Uterus (tissue), 4 donors: ENCODE measurements at regions of chr7 and their contacts with region 1.

Region 1: GRCh38 chr7:74371381-74372341 is 82.0 kb upstream of the GTF2IRD1 start:
- DNase-seq: peak; percentile 42 to 58
- H3K4me3 ChIP-seq: no peak overlapping the region
- H3K27ac ChIP-seq: peak overlapping the region; percentile 55 to 66
- H3K4me1 ChIP-seq: no peaks in the 10 kb centered on the region
- H3K27me3 ChIP-seq: no peaks in the 10 kb centered on the region
- CTCF ChIP-seq: no peak
- POLR2A ChIP-seq: no peak

Region 2: DNA sequence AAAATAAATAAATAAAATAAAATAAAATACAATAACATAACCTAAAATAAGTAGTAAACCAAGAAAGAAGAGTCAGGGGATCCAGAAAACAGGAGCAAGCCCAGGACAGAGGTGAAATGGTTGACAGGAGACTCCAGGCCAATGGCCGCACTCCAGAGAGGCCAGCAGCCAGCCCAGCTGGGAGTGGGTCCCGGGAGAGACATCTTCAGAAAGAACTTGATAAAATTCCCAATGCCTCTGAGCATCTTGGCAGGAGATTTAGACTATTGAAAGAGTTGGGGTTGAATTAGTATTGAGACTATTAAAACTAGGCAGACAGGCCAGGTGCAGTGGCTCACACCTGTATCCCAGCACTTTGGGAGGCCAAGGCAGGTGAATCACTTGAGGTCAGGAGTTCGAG is 19.8 kb before region 1 on chr7:
- intact Hi-C with region 1: loop called (anchors 2 kb)
- DNase-seq: peak in 1 of 2 donors; percentile 65
- H3K4me3 ChIP-seq: no peak overlapping the region
- H3K27ac ChIP-seq: no peak overlapping the region
- H3K4me1 ChIP-seq: no peaks in the 10 kb centered on the region
- H3K27me3 ChIP-seq: no peaks in the 10 kb centered on the region
- CTCF ChIP-seq: no peak
- POLR2A ChIP-seq: no peak